A673 (cell line): ENCODE measurements at regions of chr22 and their contacts with region 1.

Region 1: GRCh38 chr22:18987765-18988164 is 51.7 kb upstream of the PRODH start:
- DNase-seq: peak; percentile 46
- H3K4me3 ChIP-seq: no peak overlapping the region
- H3K27ac ChIP-seq: no peak overlapping the region
- H3K4me1 ChIP-seq: no peaks in the 10 kb centered on the region
- H3K27me3 ChIP-seq: no peaks in the 10 kb centered on the region
- CTCF ChIP-seq: peak; percentile 56

Region 2: GRCh38 chr22:19043121-19044055 is 55.6 kb after region 1 on chr22:
- CTCF ChIA-PET with region 1: no interaction called
- POLR2A ChIA-PET with region 1: no interaction called
- intact Hi-C with region 1: loop called (anchors 10 kb)
- DNase-seq: no peak
- H3K4me3 ChIP-seq: no peak overlapping the region
- H3K27ac ChIP-seq: no peak overlapping the region
- H3K4me1 ChIP-seq: no peaks in the 10 kb centered on the region
- H3K27me3 ChIP-seq: no peaks in the 10 kb centered on the region
- CTCF ChIP-seq: no peak

Region 3: DNA sequence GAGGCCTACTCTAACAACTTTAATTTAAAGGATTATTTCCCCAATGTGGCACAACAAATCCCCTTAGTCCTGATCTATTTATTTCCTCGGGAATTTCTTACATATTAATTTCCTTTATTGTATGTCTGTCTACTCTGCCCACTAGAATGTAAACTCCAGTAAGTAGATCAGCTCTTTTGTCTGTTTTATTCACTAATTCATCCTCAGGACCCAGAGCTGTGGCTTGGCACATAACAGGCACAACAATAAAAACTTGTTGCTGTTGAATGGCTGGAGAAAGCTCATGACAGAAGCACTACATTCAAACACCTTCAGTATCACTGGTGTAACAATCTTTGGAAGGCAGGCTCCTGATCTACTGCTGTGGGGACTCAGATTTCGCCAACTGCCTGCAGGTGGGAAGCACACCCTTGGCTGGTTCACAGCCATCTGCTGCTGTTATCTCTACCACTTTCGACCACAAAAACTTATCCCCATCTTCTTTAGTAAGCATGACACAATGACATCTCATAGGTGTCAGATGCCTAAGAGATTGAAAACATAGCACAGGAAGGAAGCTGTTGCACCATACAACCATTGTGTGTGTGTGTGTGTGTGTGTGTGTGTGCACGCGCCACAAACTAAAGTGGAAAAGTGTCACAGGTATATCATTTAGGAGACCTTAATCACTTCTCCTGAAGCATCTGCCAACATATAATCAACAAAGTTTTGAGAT is 431.9 kb after region 1 on chr22:
- CTCF ChIA-PET with region 1: no interaction called
- POLR2A ChIA-PET with region 1: no interaction called
- intact Hi-C with region 1: no loop called
- DNase-seq: no peak
- H3K4me3 ChIP-seq: no peak overlapping the region
- H3K27ac ChIP-seq: no peak overlapping the region
- H3K4me1 ChIP-seq: no peaks in the 10 kb centered on the region
- H3K27me3 ChIP-seq: no peaks in the 10 kb centered on the region
- CTCF ChIP-seq: no peak